GM10248 (cell line): ENCODE measurements at regions of chr11 and their contacts with region 1.

Region 1: GRCh38 chr11:61756452-61757212 is 4.2 kb downstream of the MYRF start:
- DNase-seq: peak; percentile 89
- CTCF ChIP-seq: no peak

Region 2: DNA sequence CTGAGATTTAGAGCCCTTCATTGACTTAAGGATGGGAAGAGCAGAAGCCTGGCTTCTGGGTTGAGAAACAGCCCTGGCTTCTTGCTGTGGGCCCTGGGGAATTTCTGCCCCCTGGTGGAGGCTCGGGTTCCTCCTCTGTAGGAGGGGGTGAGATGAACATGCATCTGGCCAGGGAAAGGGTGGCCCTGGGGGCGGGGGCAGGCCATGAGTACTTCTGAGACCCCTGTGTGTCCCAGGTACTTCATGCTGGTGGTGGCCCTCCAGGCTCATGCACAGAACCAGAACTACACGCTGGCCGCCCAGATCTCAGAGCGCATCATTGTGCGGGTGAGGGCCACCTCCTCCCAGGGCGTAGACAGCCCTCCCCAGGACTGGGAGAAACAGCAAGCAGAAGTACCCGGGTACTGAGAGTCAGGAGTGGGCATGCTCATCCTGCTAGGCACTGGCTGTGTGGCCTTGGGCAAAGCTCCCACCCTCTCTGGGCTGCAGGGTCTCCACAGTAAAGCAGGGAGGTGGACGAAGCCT is 20.0 kb after region 1 on chr11:
- CTCF ChIA-PET with region 1: interaction called, 12 read pairs
- POLR2A ChIA-PET with region 1: no interaction called
- DNase-seq: peak; percentile 90
- CTCF ChIP-seq: peak; percentile 68